H1 (cell line): ENCODE measurements at regions of chr16 and their contacts with region 1.

Region 1: DNA sequence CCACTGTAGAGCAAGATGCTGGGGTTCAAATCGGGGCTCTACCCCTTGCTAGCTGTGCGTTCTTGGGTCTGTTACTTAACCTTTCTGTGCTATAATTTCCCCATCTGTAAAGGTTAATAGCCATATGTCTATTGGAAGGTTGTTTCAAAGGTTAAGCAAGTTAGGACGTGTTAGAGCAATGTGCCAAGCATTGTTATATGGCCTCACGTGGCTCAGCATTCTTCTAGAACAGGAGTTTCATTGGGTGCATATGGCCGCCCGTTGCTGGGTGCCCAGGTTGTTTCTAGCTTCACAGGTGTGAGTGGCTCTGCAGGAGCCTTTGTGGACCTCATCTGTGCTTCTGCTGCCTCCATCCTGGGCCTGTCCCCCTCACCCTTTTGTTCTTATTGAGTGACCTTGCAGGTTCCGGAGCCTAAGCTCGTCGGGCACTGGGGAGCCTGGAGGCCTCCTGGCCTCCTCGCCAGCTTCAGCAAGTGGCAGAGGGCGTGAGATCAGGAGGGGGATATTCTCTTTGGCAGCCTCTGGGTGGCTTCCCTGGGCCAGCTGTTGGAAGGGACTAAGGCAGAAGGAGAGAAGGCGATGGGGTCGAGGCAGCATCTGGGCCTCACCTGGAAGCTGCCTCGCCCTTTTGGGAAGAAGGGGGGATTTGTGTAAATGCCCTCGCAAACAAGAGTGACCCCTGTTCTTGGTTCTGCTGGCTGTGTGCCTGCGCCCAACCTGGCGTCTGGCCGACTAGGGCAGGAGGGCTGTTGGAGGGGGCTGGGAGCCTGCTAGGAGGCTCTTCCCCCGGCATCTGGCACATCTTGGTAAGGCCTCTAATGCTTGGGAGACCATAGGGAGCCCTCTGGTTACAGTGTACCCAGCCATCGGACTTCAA is 80.2 kb upstream of the CIBAR2 start:
- DNase-seq: no peak
- H3K4me3 ChIP-seq: no peak overlapping the region
- H3K27ac ChIP-seq: no peak overlapping the region
- H3K4me1 ChIP-seq: peaks cover 0 to 2% (median 0%) of the 10 kb centered on the region in 4 experiments; a peak in 4 of 7 replicates
- H3K27me3 ChIP-seq: no peaks in the 10 kb centered on the region; a peak in 1 of 7 replicates
- CTCF ChIP-seq: no peak
- EP300 ChIP-seq: no peak
- POLR2A ChIP-seq: no peak
- RAD21 ChIP-seq: no peak

Region 2: DNA sequence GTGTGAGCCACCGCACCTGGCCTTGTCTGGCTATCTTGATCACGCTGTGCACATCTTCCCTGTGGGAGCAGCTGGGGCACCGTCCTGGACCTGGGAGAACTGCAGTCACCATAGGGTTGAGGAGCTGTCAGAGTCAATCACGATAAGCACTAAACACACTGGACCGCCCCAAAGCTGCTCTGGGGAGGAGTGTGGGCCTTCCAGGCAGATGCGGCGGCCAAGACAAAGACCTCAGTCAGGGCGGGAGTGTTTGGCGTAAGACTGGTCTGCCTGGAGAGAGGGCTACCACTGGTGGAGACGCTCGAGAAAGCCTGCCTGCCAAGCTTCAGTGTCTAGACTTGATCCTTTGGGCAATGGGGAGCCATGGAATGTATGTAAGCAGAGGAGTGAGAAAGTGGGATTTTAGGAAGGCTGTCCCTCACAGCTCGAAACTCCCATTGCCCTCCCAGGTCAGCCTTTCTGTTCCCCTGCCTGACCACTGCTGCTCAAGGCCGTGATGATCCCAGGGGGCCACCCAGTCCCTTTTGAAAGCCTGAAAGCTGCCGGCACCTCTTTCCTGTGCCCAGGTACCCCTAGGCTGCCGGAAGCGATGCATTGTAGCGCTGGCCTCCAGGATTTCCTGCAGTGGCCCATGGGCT is 50.9 kb before region 1 on chr16:
- CTCF ChIA-PET with region 1: no interaction called
- POLR2A ChIA-PET with region 1: no interaction called
- DNase-seq: no peak
- H3K4me3 ChIP-seq: no peak overlapping the region
- H3K27ac ChIP-seq: no peak overlapping the region
- H3K4me1 ChIP-seq: peaks cover 0 to 6% (median 2%) of the 10 kb centered on the region in 4 experiments; a peak in 3 of 7 replicates
- H3K27me3 ChIP-seq: no peaks in the 10 kb centered on the region
- CTCF ChIP-seq: no peak
- EP300 ChIP-seq: no peak
- POLR2A ChIP-seq: no peak
- RAD21 ChIP-seq: no peak

Region 3: DNA sequence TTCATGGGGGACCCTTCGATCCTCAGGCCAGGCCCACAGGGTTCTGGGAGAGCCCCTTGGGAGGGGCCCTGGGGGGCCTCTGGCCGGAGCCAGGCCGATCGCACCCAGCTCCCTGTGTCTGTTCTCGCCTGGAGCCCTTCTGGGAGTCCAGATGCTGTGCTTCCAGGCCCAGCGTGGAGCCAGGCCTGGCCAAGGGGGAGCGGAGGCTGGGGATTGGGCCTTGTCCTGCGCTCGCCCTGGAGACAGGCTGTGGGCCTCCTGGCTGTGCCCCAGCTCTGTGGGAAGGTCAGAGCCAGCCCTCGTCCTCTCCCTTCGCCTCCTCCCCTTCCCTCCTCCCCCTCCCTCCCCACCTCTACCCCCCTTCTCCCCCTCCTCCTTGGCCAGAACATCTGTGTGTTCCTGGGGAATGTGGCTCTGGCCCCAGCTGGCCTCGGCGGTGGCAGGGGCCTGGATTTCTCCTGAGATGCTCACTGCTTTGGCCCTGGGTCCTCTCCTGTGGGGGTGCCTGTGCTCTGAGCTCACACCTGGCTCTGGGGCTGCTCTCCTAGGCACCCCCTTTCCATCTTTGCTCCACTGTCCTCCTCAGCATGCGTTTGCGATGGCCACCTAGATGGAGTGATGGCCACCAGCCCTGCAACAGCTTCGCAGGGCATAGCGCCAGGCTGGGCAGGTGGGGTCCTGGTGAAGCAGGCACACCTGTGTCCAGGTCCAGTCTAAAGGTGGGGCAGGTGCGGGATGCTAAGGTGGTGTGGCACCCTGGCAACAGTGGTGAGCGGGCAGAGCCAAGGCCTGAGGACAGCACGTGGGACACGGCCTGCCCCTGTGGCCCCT is 10.4 kb after region 1 on chr16:
- CTCF ChIA-PET with region 1: interaction called, 17 read pairs
- POLR2A ChIA-PET with region 1: interaction called, 5 read pairs
- DNase-seq: no peak
- H3K4me3 ChIP-seq: no peak overlapping the region
- H3K27ac ChIP-seq: peak overlapping the region; percentile 51; the same call in 1 of the 2 replicates
- H3K4me1 ChIP-seq: peaks cover 3 to 41% (median 30%) of the 10 kb centered on the region in 4 experiments
- H3K27me3 ChIP-seq: no peaks in the 10 kb centered on the region; a peak in 1 of 7 replicates
- CTCF ChIP-seq: no peak
- EP300 ChIP-seq: no peak
- POLR2A ChIP-seq: no peak; a peak in 1 of 3 replicates
- RAD21 ChIP-seq: no peak